OCI-LY7 (cell line): ENCODE measurements at regions of chr1 and their contacts with region 1.

Region 1: GRCh38 chr1:248858891-248859889 is at the start of gene ZNF692:
- DNase-seq: peak; percentile 99
- H3K4me3 ChIP-seq: peak within 1 kb of the TSS; percentile 79
- H3K27ac ChIP-seq: peak within 1 kb of the TSS; percentile 72
- H3K4me1 ChIP-seq: peaks cover 39% of the 10 kb centered on the region
- CTCF ChIP-seq: no peak
- total RNA-seq, gene ZNF692: 49.7 and 65.0 TPM in 2 replicates

Region 2: DNA sequence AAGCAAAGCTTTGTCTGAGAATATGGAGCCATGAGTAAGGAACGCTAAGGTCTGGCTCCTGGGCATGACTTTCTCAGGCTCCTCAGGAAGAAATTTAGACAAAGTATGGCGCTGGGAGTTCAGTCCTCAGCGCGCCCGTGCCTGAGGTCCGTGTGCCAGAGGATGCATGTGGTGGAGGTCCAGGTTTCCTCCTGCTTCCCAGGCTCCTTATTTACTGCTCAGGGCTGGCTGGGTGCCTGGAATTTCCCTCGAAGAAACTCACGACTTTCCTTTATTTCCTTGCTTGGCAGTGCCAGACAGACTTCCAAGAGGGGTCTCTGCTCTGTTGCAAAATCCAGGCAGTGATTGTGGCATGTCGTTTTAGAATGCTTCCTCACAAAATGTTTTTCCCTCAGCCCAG is 1297.0 kb before region 1 on chr1:
- CTCF ChIA-PET with region 1: no interaction called
- POLR2A ChIA-PET with region 1: no interaction called
- intact Hi-C with region 1: no loop called
- DNase-seq: no peak
- H3K4me3 ChIP-seq: no peak overlapping the region
- H3K27ac ChIP-seq: no peak overlapping the region
- H3K4me1 ChIP-seq: no peaks in the 10 kb centered on the region
- CTCF ChIP-seq: no peak

Region 3: GRCh38 chr1:248670003-248670402 is 189.2 kb before region 1 on chr1:
- CTCF ChIA-PET with region 1: no interaction called
- POLR2A ChIA-PET with region 1: no interaction called
- intact Hi-C with region 1: no loop called
- DNase-seq: peak; percentile 15
- H3K4me3 ChIP-seq: no peak overlapping the region
- H3K27ac ChIP-seq: no peak overlapping the region
- H3K4me1 ChIP-seq: no peaks in the 10 kb centered on the region
- CTCF ChIP-seq: no peak

Region 4: GRCh38 chr1:248906009-248906752 is 47.0 kb after region 1 on chr1 and contains the start of gene PGBD2:
- CTCF ChIA-PET with region 1: no interaction called
- POLR2A ChIA-PET with region 1: interaction called, 9 read pairs
- intact Hi-C with region 1: loop called (anchors 1 kb)
- DNase-seq: peak; percentile 95
- H3K4me3 ChIP-seq: peak within 1 kb of the TSS; percentile 72
- H3K27ac ChIP-seq: peak within 1 kb of the TSS; percentile 68
- H3K4me1 ChIP-seq: peaks cover 16% of the 10 kb centered on the region
- CTCF ChIP-seq: peak; percentile 74
- total RNA-seq, gene PGBD2: 9.2 and 13.0 TPM in 2 replicates